ENCODE measurements at regions of chr20 and their contacts with region 1.

Region 1: DNA sequence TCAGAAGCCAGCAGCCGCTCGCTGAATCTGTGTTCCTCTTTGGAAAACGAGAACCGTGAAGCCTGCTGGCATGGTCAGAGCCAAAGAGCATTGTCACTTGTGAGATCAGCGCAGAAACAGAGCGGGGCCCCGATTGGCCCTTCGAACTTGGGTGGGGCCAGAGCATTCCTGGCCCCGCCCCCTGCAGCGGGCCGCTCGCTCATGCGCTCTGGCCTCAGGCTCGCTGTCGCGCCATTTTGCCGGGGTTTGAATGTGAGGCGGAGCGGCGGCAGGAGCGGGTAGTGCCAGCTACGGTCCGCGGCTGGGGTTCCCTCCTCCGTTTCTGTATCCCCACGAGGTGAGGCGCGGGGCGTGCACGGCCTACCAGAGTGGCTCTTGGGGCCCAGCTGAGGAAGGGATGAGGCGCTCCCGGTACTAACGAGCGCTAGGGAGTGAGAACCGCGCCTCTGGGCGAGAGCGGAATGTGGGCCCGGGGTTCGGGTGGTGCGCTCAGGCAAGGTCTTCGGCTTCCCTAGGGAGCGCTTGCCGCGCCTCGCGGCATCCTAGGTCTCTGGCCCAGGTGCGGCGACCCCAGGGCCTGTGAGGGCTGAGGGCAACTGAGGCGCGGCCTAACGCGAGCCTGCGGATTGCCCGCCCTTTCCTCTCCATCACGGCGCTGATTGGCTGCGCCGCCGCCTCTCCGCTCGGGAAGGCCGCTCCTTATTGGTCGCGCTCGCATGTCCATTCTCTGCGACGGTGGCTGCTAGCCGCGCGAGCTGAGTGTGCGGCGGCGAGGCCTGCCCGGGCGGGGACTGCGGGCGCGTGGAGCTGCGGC is at the start of gene CSE1L:
- DNase-seq: peak; percentile 88 to 97 (median 93)
- ATAC-seq: peak; percentile 84
- H3K4me3 ChIP-seq: peak within 1 kb of the TSS; percentile 97
- H3K4me3 Mint-ChIP-seq: peak within 1 kb of the TSS; percentile 97
- H3K27ac ChIP-seq: peak within 1 kb of the TSS; percentile 91 to 96
- H3K27ac Mint-ChIP-seq: peak within 1 kb of the TSS; percentile 92
- H3K4me1 ChIP-seq: peaks cover 41% of the 10 kb centered on the region
- H3K4me1 Mint-ChIP-seq: peaks cover 39% of the 10 kb centered on the region
- H3K27me3 ChIP-seq: no peaks in the 10 kb centered on the region
- H3K27me3 Mint-ChIP-seq: no peaks in the 10 kb centered on the region
- CTCF ChIP-seq: no peak
- total RNA-seq, gene CSE1L: 30.0 to 30.1 TPM

Region 2: GRCh38 chr20:48921151-48921898 is 125.0 kb before region 1 on chr20 and contains the start of gene ARFGEF2:
- CTCF ChIA-PET with region 1: no interaction called
- POLR2A ChIA-PET with region 1: no interaction called
- intact Hi-C with region 1: loop called in 1 of 2 experiments (anchors 5 kb)
- DNase-seq: peak; percentile 72 to 96 (median 89)
- ATAC-seq: peak; percentile 89
- H3K4me3 ChIP-seq: peak within 1 kb of the TSS; percentile 96
- H3K4me3 Mint-ChIP-seq: peak within 1 kb of the TSS; percentile 93
- H3K27ac ChIP-seq: peak within 1 kb of the TSS; percentile 83 to 92
- H3K27ac Mint-ChIP-seq: peak within 1 kb of the TSS; percentile 93
- H3K4me1 ChIP-seq: peaks cover 23% of the 10 kb centered on the region
- H3K4me1 Mint-ChIP-seq: peaks cover 56% of the 10 kb centered on the region
- H3K27me3 ChIP-seq: no peaks in the 10 kb centered on the region
- H3K27me3 Mint-ChIP-seq: no peaks in the 10 kb centered on the region
- CTCF ChIP-seq: no peak
- total RNA-seq, gene ARFGEF2: 23.0 to 23.4 TPM

Region 3: GRCh38 chr20:49278036-49278817 is 231.9 kb after region 1 on chr20 and contains the start of gene ZNFX1:
- CTCF ChIA-PET with region 1: no interaction called
- POLR2A ChIA-PET with region 1: interaction called, 4 read pairs
- intact Hi-C with region 1: loop called in 1 of 2 experiments (anchors 1 kb)
- DNase-seq: peak; percentile 95 to 99 (median 99)
- ATAC-seq: peak; percentile 84
- H3K4me3 ChIP-seq: peak within 1 kb of the TSS; percentile 80
- H3K4me3 Mint-ChIP-seq: peak within 1 kb of the TSS; percentile 89
- H3K27ac ChIP-seq: peak within 1 kb of the TSS; percentile 90 to 95
- H3K27ac Mint-ChIP-seq: peak within 1 kb of the TSS; percentile 93
- H3K4me1 ChIP-seq: peaks cover 79% of the 10 kb centered on the region
- H3K4me1 Mint-ChIP-seq: peaks cover 70% of the 10 kb centered on the region
- H3K27me3 ChIP-seq: no peaks in the 10 kb centered on the region
- H3K27me3 Mint-ChIP-seq: peaks cover 4% of the 10 kb centered on the region
- CTCF ChIP-seq: no peak
- total RNA-seq, gene ZNFX1: 50.6 to 51.6 TPM

Region 4: GRCh38 chr20:49936153-49937027 is 890.1 kb after region 1 on chr20 and contains the start of gene RNF114:
- CTCF ChIA-PET with region 1: no interaction called
- POLR2A ChIA-PET with region 1: no interaction called
- intact Hi-C with region 1: loop called in 1 of 2 experiments (anchors 10 kb)
- DNase-seq: peak; percentile 84 to 97 (median 90)
- ATAC-seq: peak; percentile 96
- H3K4me3 ChIP-seq: peak within 1 kb of the TSS; percentile 97
- H3K4me3 Mint-ChIP-seq: peak within 1 kb of the TSS; percentile 93
- H3K27ac ChIP-seq: peak within 1 kb of the TSS; percentile 81 to 82
- H3K27ac Mint-ChIP-seq: peak within 1 kb of the TSS; percentile 90
- H3K4me1 ChIP-seq: peaks cover 42% of the 10 kb centered on the region
- H3K4me1 Mint-ChIP-seq: peaks cover 51% of the 10 kb centered on the region
- H3K27me3 ChIP-seq: no peaks in the 10 kb centered on the region
- H3K27me3 Mint-ChIP-seq: no peaks in the 10 kb centered on the region
- CTCF ChIP-seq: no peak
- total RNA-seq, gene RNF114: 129 to 132 TPM

Measured in CD4-positive, alpha-beta T cell (primary cell).